ENCODE measurements at regions of chr18 and their contacts with region 1.

Region 1: DNA sequence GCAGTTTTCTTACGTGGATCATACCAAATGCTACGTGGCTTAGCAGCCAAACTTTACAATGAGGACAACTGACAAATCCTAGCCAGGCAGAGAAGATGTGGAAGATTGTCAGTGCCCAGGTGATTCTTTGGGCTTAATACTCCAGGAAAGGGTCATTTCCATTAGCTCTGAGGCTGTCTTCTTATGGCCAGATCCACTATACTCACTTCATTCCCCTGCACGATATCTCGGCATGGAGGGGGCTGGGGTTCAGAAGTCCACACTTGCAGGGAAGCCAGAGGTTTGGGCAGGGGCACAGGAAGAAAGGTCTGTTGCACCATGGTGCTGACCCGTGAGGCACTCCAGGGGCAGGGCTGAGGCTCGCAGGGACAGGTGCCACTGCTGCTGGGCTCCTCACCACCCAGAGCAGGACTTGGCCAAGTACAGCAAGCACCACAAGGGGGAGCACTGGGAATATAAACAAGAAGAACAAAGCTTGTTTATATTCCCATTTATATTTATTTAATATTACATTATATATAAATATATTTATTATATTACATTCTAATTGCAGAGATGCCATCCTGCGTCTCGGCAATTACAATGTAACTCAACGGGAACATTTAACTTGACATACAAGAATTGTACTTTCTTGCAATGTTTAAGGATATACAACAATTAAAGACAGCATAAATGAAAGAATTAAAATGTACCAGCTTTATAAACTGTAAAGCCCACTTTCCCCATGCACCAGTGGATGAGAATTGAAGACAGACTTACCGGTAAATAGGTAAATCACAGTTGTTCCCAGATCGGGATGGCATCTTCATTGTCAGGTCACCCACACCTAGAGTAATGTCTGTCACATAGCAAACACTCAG is 27.2 kb downstream of the CLUL1 start:
- DNase-seq: peak; percentile 62
- ATAC-seq: peak; percentile 99
- H3K4me3 ChIP-seq: peak overlapping the region in 1 of 3 experiments; percentile 56; a peak in 2 of 6 replicates
- H3K27ac ChIP-seq: no peak overlapping the region
- H3K4me1 ChIP-seq: peaks cover 6% of the 10 kb centered on the region
- H3K27me3 ChIP-seq: peaks cover 0 to 5% of the 10 kb centered on the region in 2 experiments; a peak in 2 of 5 replicates
- CTCF ChIP-seq: peak; percentile 75
- EP300 ChIP-seq: no peak
- POLR2A ChIP-seq: no peak
- RAD21 ChIP-seq: 0 out of 2 replicates have a peak, but pooled peaks have one; percentile 30

Region 2: DNA sequence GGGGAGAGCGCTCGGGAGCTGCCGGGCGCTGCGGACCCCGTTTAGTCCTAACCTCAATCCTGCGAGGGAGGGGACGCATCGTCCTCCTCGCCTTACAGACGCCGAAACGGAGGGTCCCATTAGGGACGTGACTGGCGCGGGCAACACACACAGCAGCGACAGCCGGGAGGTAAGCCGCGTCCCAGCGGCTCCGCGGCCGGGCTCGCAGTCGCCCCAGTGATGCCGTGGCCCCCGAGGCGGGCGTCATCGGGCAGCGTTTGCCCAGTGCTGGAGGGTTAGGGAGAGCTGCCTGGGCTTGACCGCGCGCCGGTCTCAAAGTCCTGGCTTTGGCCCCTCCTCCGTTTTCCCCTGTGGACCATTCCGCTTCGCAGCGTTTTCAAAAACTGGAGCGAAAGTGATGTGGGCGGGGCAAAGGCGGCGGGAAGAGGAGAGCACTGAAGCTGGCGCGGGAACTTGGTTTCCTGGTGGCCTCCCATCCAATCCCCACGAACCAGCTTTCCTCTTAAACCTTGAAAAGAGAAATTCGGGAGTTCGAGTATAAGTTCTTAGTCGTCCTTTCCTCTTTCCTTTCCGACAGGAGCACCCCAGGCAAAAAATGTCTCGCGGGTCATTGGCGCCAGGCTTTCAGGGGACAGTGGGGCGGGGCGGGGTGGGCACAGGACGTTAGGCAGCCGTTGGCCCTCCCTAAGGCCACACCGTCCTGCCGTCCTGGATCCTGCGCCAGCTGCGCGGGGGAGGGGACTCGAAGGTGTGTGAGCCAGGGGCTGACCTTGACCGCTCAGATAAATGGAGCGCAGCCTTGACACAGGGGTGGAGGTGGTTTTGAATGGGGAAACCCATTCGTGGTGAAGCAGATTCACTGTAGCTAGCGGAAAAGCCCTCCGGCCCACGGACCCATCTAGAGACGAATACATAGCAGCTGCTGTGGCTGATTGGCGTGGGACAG is 34.3 kb after region 1 on chr18:
- CTCF ChIA-PET with region 1: no interaction called
- POLR2A ChIA-PET with region 1: interaction called, 4 read pairs
- in situ Hi-C with region 1: no loop called
- intact Hi-C with region 1: loop called (anchors 5 kb)
- DNase-seq: peak; percentile 92
- ATAC-seq: peak; percentile 96
- H3K4me3 ChIP-seq: peak overlapping the region; percentile 66 to 93 (median 91)
- H3K27ac ChIP-seq: peak overlapping the region; percentile 96
- H3K4me1 ChIP-seq: peaks cover 49% of the 10 kb centered on the region
- H3K27me3 ChIP-seq: no peaks in the 10 kb centered on the region
- CTCF ChIP-seq: peak; percentile 5; the same call in 1 of the 2 replicates
- EP300 ChIP-seq: peak; percentile 31 to 40; a peak in 2 of 4 replicates
- POLR2A ChIP-seq: peak; percentile 93 to 95
- RAD21 ChIP-seq: peak; percentile 48; the same call in 1 of the 2 replicates

Region 3: GRCh38 chr18:676069-676468 is 52.1 kb after region 1 on chr18:
- CTCF ChIA-PET with region 1: no interaction called
- POLR2A ChIA-PET with region 1: no interaction called
- in situ Hi-C with region 1: no loop called
- intact Hi-C with region 1: no loop called
- DNase-seq: no peak
- ATAC-seq: no peak
- H3K4me3 ChIP-seq: no peak overlapping the region
- H3K27ac ChIP-seq: no peak overlapping the region
- H3K4me1 ChIP-seq: no peaks in the 10 kb centered on the region
- H3K27me3 ChIP-seq: no peaks in the 10 kb centered on the region
- CTCF ChIP-seq: no peak
- EP300 ChIP-seq: no peak
- POLR2A ChIP-seq: no peak
- RAD21 ChIP-seq: no peak

Region 4: GRCh38 chr18:703213-703967 is 79.4 kb after region 1 on chr18:
- CTCF ChIA-PET with region 1: no interaction called
- POLR2A ChIA-PET with region 1: no interaction called
- in situ Hi-C with region 1: no loop called
- intact Hi-C with region 1: loop called (anchors 10 kb)
- DNase-seq: peak; percentile 73
- ATAC-seq: peak; percentile 87
- H3K4me3 ChIP-seq: peak overlapping the region in 2 of 3 experiments; percentile 9 to 26; a peak in 2 of 6 replicates
- H3K27ac ChIP-seq: peak overlapping the region; percentile 82
- H3K4me1 ChIP-seq: peaks cover 33% of the 10 kb centered on the region
- H3K27me3 ChIP-seq: no peaks in the 10 kb centered on the region
- CTCF ChIP-seq: no peak
- EP300 ChIP-seq: peak in 1 of 2 experiments; percentile 12; a peak in 1 of 4 replicates
- POLR2A ChIP-seq: no peak; a peak in 1 of 4 replicates
- RAD21 ChIP-seq: no peak

Region 5: DNA sequence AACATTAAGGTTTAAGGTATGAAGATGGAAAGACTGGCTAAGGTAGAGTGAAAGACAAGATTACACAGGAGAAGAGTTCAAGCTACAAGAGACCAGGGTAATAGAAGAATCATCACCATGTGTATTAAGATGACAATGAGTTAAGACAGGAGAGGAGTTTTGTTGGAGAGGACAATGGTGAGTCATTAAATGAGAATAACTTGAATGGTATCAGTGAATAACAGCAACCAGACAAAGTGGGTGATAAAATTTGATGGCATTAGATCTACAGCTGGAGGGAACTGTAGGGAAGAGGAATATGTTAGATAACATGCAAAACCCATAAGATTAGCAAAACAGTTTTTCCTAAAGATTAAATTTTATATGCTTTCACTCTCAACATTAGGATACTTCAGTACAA is 107.2 kb after region 1 on chr18:
- CTCF ChIA-PET with region 1: no interaction called
- POLR2A ChIA-PET with region 1: no interaction called
- in situ Hi-C with region 1: no loop called
- intact Hi-C with region 1: loop called (anchors 2 kb)
- DNase-seq: no peak
- ATAC-seq: no peak
- H3K4me3 ChIP-seq: no peak overlapping the region
- H3K27ac ChIP-seq: no peak overlapping the region
- H3K4me1 ChIP-seq: no peaks in the 10 kb centered on the region
- H3K27me3 ChIP-seq: no peaks in the 10 kb centered on the region
- CTCF ChIP-seq: no peak
- EP300 ChIP-seq: no peak
- POLR2A ChIP-seq: no peak
- RAD21 ChIP-seq: no peak

Region 6: GRCh38 chr18:830315-830901 is 206.4 kb after region 1 on chr18:
- CTCF ChIA-PET with region 1: interaction called, 8 read pairs
- POLR2A ChIA-PET with region 1: no interaction called
- in situ Hi-C with region 1: loop called (anchors 25 kb)
- intact Hi-C with region 1: loop called (anchors 2 kb)
- DNase-seq: no peak
- ATAC-seq: no peak
- H3K4me3 ChIP-seq: no peak overlapping the region; a peak in 1 of 6 replicates
- H3K27ac ChIP-seq: no peak overlapping the region
- H3K4me1 ChIP-seq: peaks cover 52% of the 10 kb centered on the region
- H3K27me3 ChIP-seq: no peaks in the 10 kb centered on the region
- CTCF ChIP-seq: no peak
- EP300 ChIP-seq: no peak
- POLR2A ChIP-seq: no peak
- RAD21 ChIP-seq: no peak

Region 7: GRCh38 chr18:839224-840022 is 215.4 kb after region 1 on chr18:
- CTCF ChIA-PET with region 1: interaction called, 6 read pairs
- POLR2A ChIA-PET with region 1: no interaction called
- in situ Hi-C with region 1: loop called (anchors 25 kb)
- intact Hi-C with region 1: no loop called
- DNase-seq: peak; percentile 69
- ATAC-seq: peak; percentile 96
- H3K4me3 ChIP-seq: peak overlapping the region; percentile 44 to 58 (median 46); a peak in 5 of 6 replicates
- H3K27ac ChIP-seq: no peak overlapping the region
- H3K4me1 ChIP-seq: peaks cover 54% of the 10 kb centered on the region
- H3K27me3 ChIP-seq: 0 out of 5 replicates have a peak, but pooled peaks cover 0 to 3% of the 10 kb centered on the region in 2 experiments
- CTCF ChIP-seq: peak; percentile 79
- EP300 ChIP-seq: no peak
- POLR2A ChIP-seq: no peak
- RAD21 ChIP-seq: peak; percentile 70; the same call in 1 of the 2 replicates

Measured in HepG2 (cell line).